ENCODE measurements at regions of chr9 and their contacts with region 1.

Region 1: DNA sequence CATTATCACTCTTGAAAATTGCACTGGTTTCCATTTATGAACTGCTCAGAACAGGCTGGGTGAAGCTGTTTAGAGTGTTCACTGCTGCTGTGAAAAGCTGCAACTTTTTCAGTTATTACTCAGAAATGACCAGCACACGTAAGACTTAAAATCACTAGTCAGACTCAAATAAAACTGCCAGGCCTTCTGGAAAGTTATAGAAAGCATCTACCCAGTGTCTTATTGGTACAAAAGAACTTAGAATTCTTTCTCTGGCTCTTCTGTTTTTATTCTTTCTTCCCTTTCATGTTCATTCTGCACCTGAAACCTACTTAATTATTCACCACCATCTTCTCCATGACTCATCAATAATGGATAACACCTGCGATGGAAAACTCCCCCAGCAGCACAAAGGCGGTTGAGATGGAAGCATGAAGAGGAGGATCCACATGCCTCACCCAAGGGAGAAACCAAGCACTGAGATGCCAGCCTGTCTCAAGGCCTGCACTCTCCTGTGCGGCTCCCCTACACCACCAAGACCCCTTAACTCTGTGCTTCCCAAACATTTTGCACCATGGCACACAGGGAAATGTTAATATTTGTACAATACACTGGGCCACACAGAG is 171.9 kb downstream of the ENTREP1 start:
- DNase-seq: no peak
- ATAC-seq: no peak
- H3K4me3 ChIP-seq: no peak overlapping the region
- H3K27ac ChIP-seq: no peak overlapping the region
- H3K4me1 ChIP-seq: peaks cover 0 to 7% (median 0%) of the 10 kb centered on the region in 3 donors
- H3K27me3 ChIP-seq: no peaks in the 10 kb centered on the region
- CTCF ChIP-seq: no peak

Region 2: GRCh38 chr9:69444021-69444420 is 52.9 kb before region 1 on chr9:
- intact Hi-C with region 1: loop called in 1 of 3 experiments (anchors 10 kb)
- DNase-seq: no peak
- ATAC-seq: no peak
- H3K4me3 ChIP-seq: no peak overlapping the region
- H3K27ac ChIP-seq: no peak overlapping the region
- H3K4me1 ChIP-seq: no peaks in the 10 kb centered on the region
- H3K27me3 ChIP-seq: no peaks in the 10 kb centered on the region
- CTCF ChIP-seq: no peak

Region 3: GRCh38 chr9:69649566-69650250 is 152.8 kb after region 1 on chr9:
- intact Hi-C with region 1: no loop called
- DNase-seq: no peak
- ATAC-seq: no peak
- H3K4me3 ChIP-seq: no peak overlapping the region
- H3K27ac ChIP-seq: no peak overlapping the region
- H3K4me1 ChIP-seq: peaks cover 3 to 7% (median 4%) of the 10 kb centered on the region in 3 donors
- H3K27me3 ChIP-seq: no peaks in the 10 kb centered on the region
- CTCF ChIP-seq: no peak

Measured in pancreas (tissue), 10 donors.